Heart left ventricle (tissue), 16 donors: ENCODE measurements at regions of chr7 and their contacts with region 1.

Region 1: DNA sequence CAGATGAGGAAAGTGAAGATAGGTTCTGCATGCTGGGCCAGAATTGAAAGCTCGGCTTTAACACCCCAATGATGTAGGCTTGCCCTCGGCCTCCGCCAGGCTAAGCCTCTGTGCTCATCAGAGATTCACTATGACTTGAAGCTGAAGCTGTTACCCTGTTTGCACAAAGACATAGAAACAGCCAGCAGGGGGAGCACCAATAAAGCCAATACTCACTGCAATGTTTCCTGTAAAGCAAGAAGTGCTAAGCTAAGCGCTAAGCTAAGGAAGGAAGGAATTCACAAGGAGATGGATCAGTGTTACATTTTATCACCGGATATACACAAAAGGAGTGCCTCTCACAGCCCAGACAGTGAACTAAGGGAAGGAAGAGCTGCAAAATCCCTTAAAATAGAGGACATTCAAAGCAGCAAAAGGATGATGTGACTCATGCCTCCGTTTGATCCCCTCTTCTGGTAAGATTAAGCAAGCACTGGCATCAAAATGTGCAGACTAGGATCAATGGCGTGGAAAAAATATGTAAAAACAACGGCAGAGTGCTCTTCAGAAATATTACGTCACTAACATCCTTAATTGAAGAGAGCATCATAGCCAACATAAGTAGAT is 153.8 kb downstream of the COBL start:
- DNase-seq: peak in 4 of 5 donors; percentile 61 to 74 (median 68)
- ATAC-seq: peak; percentile 68 to 90 (median 86)
- H3K4me3 ChIP-seq: no peak overlapping the region
- H3K27ac ChIP-seq: no peak overlapping the region
- H3K4me1 ChIP-seq: peaks cover 0 to 17% (median 2%) of the 10 kb centered on the region in 12 donors
- H3K27me3 ChIP-seq: peaks cover 0 to 7% (median 0%) of the 10 kb centered on the region in 9 donors
- CTCF ChIP-seq: peak; percentile 72 to 88 (median 78)
- POLR2A ChIP-seq: no peak

Region 2: GRCh38 chr7:50092579-50093491 is 1070.0 kb before region 1 on chr7 and contains the start of gene ZPBP:
- intact Hi-C with region 1: loop called in 3 of 10 experiments (anchors 1 to 5 kb)
- DNase-seq: peak in 4 of 5 donors; percentile 10 to 66 (median 24)
- ATAC-seq: peak in 2 of 4 donors; percentile 22 to 38
- H3K4me3 ChIP-seq: peak within 1 kb of the TSS; percentile 22 to 58 (median 46)
- H3K27ac ChIP-seq: no peak within 1 kb of the TSS
- H3K4me1 ChIP-seq: peaks cover 0 to 6% (median 0%) of the 10 kb centered on the region in 12 donors
- H3K27me3 ChIP-seq: peaks cover 0 to 17% (median 0%) of the 10 kb centered on the region in 9 donors
- CTCF ChIP-seq: peak; percentile 55 to 80 (median 70)
- POLR2A ChIP-seq: no peak
- total RNA-seq, gene ZPBP: not detected

Region 3: DNA sequence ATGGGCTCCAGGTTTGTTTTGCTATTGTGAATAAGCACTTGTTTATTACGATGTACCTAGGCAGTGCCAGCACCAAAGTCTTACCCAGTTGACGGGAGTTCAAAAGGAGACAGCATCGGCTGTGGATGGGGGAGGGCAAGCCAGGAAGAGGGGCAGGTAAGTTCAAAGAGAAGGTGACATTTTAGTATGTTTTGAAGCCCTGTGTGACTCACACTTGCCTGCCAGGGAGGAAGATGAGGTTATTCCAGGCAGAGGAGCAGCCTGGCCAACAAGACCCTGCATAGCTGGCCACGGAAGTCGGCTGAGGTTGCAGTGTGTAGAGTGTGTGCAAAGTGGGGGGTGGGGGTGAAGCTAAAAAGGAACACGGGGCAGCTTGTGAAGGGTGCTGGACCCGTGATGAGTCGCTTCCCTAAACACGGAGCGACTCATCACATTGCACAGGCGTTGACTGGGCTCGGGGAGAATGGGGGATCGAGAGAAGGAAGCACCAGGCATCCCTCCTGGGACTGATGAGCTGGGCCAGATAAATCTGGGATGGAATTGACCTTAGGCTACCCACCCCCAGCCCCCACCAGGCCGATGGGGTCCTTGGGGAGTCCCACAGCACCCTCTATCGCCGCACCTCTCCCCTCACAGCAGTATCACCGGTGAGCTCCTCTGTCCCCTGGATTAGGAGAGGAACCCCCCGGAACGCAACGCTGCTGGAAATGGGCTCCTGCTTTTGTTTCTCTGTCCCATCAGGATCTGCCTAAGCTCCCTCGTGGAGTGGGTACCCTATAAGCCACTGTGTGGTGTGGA is 956.2 kb before region 1 on chr7:
- intact Hi-C with region 1: loop called in 5 of 10 experiments (anchors 2 to 10 kb)
- DNase-seq: no peak
- ATAC-seq: peak in 3 of 4 donors; percentile 24 to 63 (median 39)
- H3K4me3 ChIP-seq: no peak overlapping the region
- H3K27ac ChIP-seq: peak overlapping the region in 1 of 12 donors; percentile 52
- H3K4me1 ChIP-seq: peaks cover 0 to 48% (median 0%) of the 10 kb centered on the region in 12 donors
- H3K27me3 ChIP-seq: peaks cover 0 to 8% (median 0%) of the 10 kb centered on the region in 9 donors
- CTCF ChIP-seq: no peak
- POLR2A ChIP-seq: no peak

Region 4: DNA sequence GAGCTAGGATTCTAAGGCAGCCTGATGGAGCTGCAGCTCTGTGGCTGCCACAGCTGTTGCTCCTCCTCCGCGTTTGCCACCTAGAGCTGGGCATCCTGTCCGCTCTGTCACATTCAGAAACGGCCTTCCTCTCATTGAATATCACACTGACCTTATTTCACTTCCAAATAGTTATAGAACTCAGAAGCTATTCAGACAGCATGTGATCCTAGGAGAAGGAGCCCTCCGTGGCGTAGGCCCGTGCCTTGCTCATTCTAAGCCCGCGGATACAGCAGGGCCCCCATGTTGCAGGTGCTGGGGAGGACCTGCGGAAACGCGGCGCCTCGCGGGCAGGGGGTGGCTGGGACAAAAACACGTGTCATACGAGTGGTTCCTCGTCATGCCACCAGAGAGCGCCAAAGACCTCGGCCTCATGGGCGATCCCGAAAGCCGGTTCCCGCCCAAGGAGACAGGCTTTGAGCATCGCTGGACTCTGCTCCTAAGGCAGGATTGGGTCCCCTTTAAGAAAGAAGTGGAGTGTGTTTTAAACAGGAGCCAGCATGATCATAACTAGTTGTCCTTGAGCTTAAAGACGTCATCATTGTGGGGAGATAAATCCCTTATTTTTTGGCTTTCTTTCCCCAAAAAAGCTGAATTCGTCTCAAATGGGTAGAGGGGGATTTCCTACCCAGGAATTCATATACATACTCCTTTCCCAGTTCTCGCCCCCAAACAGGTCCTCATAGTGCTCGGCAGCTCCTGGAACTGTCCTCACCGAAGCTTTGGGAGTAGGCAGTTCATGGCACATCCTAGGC is 694.8 kb before region 1 on chr7:
- intact Hi-C with region 1: loop called (anchors 1 to 5 kb)
- DNase-seq: peak; percentile 72 to 89 (median 80)
- ATAC-seq: peak; percentile 70 to 97 (median 90)
- H3K4me3 ChIP-seq: peak overlapping the region in 1 of 12 donors; percentile 12
- H3K27ac ChIP-seq: no peak overlapping the region
- H3K4me1 ChIP-seq: peaks cover 0 to 8% (median 0%) of the 10 kb centered on the region in 12 donors
- H3K27me3 ChIP-seq: peaks cover 0 to 5% (median 0%) of the 10 kb centered on the region in 9 donors
- CTCF ChIP-seq: peak; percentile 85 to 96 (median 89)
- POLR2A ChIP-seq: no peak

Region 5: DNA sequence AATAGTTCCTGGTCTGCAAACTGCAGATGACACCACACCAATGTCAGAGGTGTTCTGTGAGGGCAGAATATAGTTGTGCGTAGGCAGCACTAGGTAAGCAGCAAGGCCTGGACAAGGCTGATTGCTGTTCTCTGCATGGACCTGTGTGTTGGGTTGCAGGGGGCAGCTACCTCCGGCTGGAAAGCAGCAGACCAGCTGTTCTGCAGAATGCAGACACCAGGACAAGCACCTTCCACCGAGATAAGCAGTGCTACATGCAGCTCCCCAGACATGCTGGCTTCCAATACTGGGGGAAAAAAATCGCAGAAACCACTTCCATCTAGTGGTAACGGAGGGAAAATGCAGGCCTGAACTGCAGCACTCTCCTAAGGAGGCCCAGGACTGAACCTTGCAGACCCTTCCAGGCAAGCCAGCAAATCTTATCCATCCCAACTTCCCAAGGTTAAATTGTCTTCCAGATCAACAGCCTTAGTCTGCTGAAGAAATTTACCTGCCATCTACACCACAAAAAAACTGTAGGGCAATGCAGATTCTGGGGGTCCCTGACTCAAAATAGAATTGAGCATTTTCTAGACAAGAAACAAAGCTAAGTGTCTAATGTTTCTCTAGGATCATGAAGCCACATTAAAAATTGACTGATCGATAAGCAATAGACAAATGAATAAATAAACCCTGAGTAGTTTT is 204.2 kb after region 1 on chr7:
- intact Hi-C with region 1: loop called (anchors 1 to 5 kb)
- DNase-seq: peak in 3 of 5 donors; percentile 26 to 36 (median 36)
- ATAC-seq: peak; percentile 71 to 94 (median 85)
- H3K4me3 ChIP-seq: no peak overlapping the region
- H3K27ac ChIP-seq: no peak overlapping the region
- H3K4me1 ChIP-seq: no peaks in the 10 kb centered on the region
- H3K27me3 ChIP-seq: no peaks in the 10 kb centered on the region
- CTCF ChIP-seq: peak; percentile 36 to 77 (median 64)
- POLR2A ChIP-seq: no peak